ENCODE measurements at regions of chr14 and their contacts with region 1.

Region 1: GRCh38 chr14:92605274-92605940 is 91.8 kb downstream of the RIN3 start:
- DNase-seq: no peak
- ATAC-seq: no peak
- H3K4me3 ChIP-seq: no peak overlapping the region
- H3K27ac ChIP-seq: no peak overlapping the region
- H3K4me1 ChIP-seq: no peaks in the 10 kb centered on the region
- H3K27me3 ChIP-seq: no peaks in the 10 kb centered on the region
- CTCF ChIP-seq: no peak

Region 2: DNA sequence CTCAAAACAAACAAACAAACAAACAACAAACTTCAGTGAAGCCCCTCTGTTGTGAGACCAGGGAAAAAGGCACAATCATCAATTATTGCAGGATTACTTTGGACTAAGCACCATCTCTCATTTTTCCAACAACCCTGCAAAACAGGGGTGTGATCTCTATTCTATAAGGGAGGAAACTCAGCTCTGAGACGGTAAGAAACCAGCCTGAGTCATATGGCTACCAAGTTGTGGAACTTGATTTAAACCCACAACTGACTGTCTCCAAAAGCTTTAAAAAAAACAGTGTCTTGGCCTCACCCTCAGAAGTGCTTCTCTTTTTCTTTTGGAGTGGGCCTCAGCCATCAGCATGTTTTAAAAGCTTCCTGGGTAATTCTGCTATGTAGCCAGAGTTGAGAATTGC is 42.0 kb before region 1 on chr14:
- CTCF ChIA-PET with region 1: no interaction called
- POLR2A ChIA-PET with region 1: interaction called, 10 read pairs
- in situ Hi-C with region 1: no loop called
- intact Hi-C with region 1: no loop called
- DNase-seq: no peak
- ATAC-seq: no peak
- H3K4me3 ChIP-seq: no peak overlapping the region
- H3K27ac ChIP-seq: no peak overlapping the region
- H3K4me1 ChIP-seq: no peaks in the 10 kb centered on the region
- H3K27me3 ChIP-seq: no peaks in the 10 kb centered on the region
- CTCF ChIP-seq: no peak